GM12878 (cell line): ENCODE measurements at regions of chr22 and their contacts with region 1.

Region 1: DNA sequence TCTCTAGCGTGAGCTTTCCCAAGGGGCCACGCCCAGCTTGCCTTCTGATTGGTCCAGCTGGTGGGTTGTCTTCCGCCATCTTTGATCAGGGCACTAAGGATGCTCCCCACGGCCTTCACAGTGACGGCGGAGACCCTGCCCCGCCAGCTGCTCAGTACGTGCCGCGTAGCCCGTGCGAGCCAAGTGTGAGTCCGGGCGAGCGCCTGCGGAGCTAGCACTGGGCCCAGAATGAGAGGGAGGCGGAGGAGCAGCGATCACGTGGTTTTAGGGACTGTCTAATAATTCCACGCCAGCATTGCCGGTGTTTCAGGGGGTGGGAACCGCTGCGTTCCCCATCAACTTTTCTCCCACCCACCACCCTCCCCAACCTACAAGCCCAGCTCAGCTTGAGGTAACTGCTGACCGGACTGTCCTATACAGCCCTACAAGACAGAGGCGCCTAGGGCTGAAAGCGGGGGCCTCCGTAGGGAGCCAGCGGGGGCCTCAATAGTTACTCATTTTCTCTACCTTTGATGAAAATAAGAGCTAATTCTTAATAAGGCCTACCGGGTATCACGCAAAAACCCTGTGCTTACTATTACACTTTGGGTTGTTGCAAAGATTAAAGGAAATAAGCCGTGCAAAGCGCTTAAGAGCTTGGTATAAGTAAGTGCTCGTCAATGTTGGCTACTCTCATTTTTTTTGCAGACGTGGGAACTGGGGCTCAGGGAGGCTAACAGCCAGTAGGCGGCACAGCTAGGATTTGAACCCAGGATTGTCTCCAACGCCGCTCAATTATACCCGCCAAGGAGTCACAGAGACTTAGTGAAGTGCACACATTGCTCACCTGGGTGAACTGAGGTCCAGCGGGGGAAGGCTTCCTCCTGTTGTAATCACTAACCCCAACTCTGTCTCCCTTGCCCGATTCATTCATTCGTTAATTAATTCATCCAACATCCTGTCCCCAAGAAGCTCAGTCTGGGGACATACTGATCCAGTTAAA is 1.3 kb upstream of the MTFP1 start:
- DNase-seq: peak; percentile 99
- ATAC-seq: peak; percentile 88
- H3K4me3 ChIP-seq: peak overlapping the region; percentile 86
- H3K27ac ChIP-seq: peak overlapping the region; percentile 91
- H3K4me1 ChIP-seq: peaks cover 22% of the 10 kb centered on the region
- H3K27me3 ChIP-seq: no peaks in the 10 kb centered on the region
- CTCF ChIP-seq: peak in 1 of 3 experiments; percentile 15; a peak in 1 of 6 replicates
- EP300 ChIP-seq: no peak; a peak in 1 of 4 replicates
- POLR2A ChIP-seq: peak; percentile 85
- RAD21 ChIP-seq: no peak

Region 2: DNA sequence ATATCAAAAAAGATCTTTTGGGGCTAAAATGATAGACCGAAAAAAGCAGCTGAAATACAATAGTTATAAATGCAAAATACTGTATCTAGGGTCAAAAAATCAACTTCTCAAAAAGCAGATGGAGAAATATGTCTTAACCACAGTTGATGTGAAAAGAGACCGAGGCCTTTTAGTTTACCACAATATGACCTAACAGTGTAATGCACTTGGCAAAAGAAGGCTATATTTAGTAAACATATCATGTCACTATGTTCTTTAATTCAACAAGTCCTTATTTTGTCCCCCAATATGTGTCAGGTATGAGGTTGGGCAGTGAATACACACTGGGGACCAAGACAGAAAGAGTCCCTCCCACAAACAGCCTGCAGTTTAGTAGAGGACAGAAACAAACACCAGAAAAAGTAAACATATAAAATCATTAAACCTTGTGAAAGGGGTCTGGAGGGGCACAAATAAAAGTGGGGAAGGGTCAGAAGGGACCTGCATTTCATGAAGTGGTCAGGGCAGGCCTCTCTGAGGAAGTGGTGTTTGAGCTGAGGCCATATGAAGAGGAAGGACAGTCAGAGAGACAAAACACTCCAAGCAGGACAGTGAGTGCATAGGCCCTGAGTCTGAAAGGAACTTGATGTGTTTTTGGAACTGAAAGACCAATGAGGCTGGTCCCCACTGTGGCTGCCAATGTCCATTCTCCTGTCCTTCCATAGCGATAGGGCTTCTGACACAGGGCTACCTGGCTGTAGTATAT is 231.1 kb before region 1 on chr22:
- CTCF ChIA-PET with region 1: no interaction called
- POLR2A ChIA-PET with region 1: no interaction called
- RAD21 ChIA-PET with region 1: no interaction called
- SMC1A ChIA-PET with region 1: no interaction called
- in situ Hi-C with region 1: no loop called
- intact Hi-C with region 1: no loop called
- DNase-seq: no peak
- ATAC-seq: no peak
- H3K4me3 ChIP-seq: no peak overlapping the region
- H3K27ac ChIP-seq: no peak overlapping the region
- H3K4me1 ChIP-seq: peaks cover 14% of the 10 kb centered on the region
- H3K27me3 ChIP-seq: no peaks in the 10 kb centered on the region
- CTCF ChIP-seq: no peak
- EP300 ChIP-seq: no peak
- POLR2A ChIP-seq: no peak
- RAD21 ChIP-seq: no peak

Region 3: GRCh38 chr22:30305519-30305905 is 118.8 kb before region 1 on chr22:
- CTCF ChIA-PET with region 1: no interaction called
- POLR2A ChIA-PET with region 1: interaction called, 13 read pairs
- RAD21 ChIA-PET with region 1: interaction called, 4 read pairs
- SMC1A ChIA-PET with region 1: interaction called, 6 read pairs
- in situ Hi-C with region 1: no loop called
- intact Hi-C with region 1: no loop called
- DNase-seq: peak; percentile 59
- ATAC-seq: peak; percentile 63
- H3K4me3 ChIP-seq: peak overlapping the region; percentile 51
- H3K27ac ChIP-seq: peak overlapping the region; percentile 96
- H3K4me1 ChIP-seq: peaks cover 85% of the 10 kb centered on the region
- H3K27me3 ChIP-seq: no peaks in the 10 kb centered on the region
- CTCF ChIP-seq: no peak
- EP300 ChIP-seq: no peak
- POLR2A ChIP-seq: peak; percentile 74
- RAD21 ChIP-seq: no peak

Region 4: DNA sequence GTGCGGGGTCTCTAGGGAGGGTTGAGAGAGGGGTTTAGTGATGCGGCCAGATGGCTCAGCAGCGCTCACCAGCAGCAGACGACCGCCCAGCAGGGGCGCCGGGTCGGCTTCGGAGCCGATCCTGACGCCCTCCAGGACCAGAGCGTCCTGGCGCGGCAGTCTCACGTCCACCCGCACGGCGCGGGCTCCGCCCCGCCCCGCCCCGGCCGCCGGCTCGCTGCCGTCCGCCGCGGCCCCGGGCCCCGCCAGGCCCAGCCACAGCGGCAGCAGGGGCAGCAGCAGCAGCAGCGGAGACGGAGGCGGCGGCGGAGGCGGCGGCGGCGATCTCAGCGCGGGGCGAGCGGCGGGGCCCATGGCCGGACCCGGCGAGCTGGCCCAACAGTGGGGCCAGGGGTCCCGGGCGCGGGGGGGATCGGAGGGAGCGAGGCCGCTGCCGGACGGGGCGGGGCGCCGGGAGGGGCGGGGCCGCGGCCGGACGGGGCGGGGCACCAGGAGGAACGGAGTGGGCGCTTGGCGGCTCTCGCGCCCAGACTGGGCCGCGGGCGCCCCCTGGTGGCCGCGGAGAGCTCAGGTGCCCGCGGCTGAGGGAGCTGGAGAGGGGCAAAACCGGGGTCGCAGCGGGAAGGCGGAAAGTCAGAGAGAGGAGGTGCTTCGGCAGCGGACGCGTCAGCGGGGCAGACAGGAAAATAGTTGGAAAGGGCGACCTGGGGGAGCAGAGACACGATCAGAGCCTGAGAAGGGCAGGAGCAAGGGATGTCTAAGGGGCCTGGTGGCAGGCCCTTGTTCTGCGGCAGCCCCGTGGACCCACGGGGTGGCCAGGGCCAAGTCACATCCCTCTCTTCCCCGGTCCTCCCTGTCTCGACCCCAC is 37.1 kb before region 1 on chr22 and contains the start of gene RNF215:
- CTCF ChIA-PET with region 1: interaction called, 172 read pairs
- POLR2A ChIA-PET with region 1: interaction called, 60 read pairs
- RAD21 ChIA-PET with region 1: interaction called, 137 read pairs
- SMC1A ChIA-PET with region 1: interaction called, 69 read pairs
- in situ Hi-C with region 1: no loop called
- intact Hi-C with region 1: loop called (anchors 1 kb)
- DNase-seq: no peak
- ATAC-seq: peak; percentile 88
- H3K4me3 ChIP-seq: peak within 1 kb of the TSS; percentile 77; the same call in 1 of the 2 replicates
- H3K27ac ChIP-seq: no peak within 1 kb of the TSS; the same call in 1 of the 2 replicates
- H3K4me1 ChIP-seq: peaks cover 15% of the 10 kb centered on the region
- H3K27me3 ChIP-seq: no peaks in the 10 kb centered on the region
- CTCF ChIP-seq: peak; percentile 76 to 86 (median 83)
- EP300 ChIP-seq: no peak
- POLR2A ChIP-seq: no peak; the same call in 1 of the 2 replicates
- RAD21 ChIP-seq: peak; percentile 85
- polyA plus RNA-seq, gene RNF215: 0.31 TPM in 1 of 2 experiments, not detected in the other

Region 5: GRCh38 chr22:30402028-30402765 is 22.1 kb before region 1 on chr22:
- CTCF ChIA-PET with region 1: interaction called, 172 read pairs
- POLR2A ChIA-PET with region 1: interaction called, 24 read pairs
- RAD21 ChIA-PET with region 1: interaction called, 137 read pairs
- SMC1A ChIA-PET with region 1: interaction called, 5 read pairs
- in situ Hi-C with region 1: no loop called
- intact Hi-C with region 1: no loop called
- DNase-seq: no peak
- ATAC-seq: no peak
- H3K4me3 ChIP-seq: no peak overlapping the region
- H3K27ac ChIP-seq: no peak overlapping the region
- H3K4me1 ChIP-seq: 0 out of 2 replicates have a peak, but pooled peaks cover 5% of the 10 kb centered on the region
- H3K27me3 ChIP-seq: peaks cover 4 to 7% of the 10 kb centered on the region in 2 experiments
- CTCF ChIP-seq: no peak
- EP300 ChIP-seq: no peak
- POLR2A ChIP-seq: no peak
- RAD21 ChIP-seq: no peak

Region 6: DNA sequence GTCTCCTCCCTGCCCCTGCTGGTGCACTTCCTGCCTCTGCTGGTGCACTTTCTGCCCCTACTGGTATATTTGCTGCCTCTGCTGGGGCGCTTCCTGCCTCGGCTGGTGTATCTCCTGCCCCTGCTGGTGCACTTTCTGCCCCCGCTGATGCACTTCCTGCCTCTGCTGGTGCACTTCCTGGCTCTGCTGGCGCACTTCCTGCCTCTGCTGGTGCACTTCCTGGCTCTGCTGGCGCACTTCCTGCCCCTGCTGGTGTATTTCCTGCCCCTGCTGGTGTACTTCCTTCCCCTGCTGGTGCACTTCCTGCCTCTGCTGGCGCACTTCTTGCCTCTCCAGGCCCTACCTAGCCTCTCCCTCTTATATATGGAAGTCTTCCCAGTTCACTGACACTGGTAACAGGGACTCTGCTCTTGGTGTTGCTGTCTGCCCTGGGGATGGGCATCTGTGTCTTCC is 11.4 kb after region 1 on chr22:
- CTCF ChIA-PET with region 1: interaction called, 21 read pairs
- POLR2A ChIA-PET with region 1: interaction called, 12 read pairs
- RAD21 ChIA-PET with region 1: no interaction called
- SMC1A ChIA-PET with region 1: interaction called, 11 read pairs
- in situ Hi-C with region 1: no loop called
- intact Hi-C with region 1: no loop called
- DNase-seq: no peak
- ATAC-seq: peak; percentile 52
- H3K4me3 ChIP-seq: 0 out of 2 replicates have a peak overlapping the region, but pooled peaks have one; percentile 7
- H3K27ac ChIP-seq: 0 out of 2 replicates have a peak overlapping the region, but pooled peaks have one; percentile 37
- H3K4me1 ChIP-seq: peaks cover 8% of the 10 kb centered on the region
- H3K27me3 ChIP-seq: no peaks in the 10 kb centered on the region
- CTCF ChIP-seq: peak in 2 of 3 experiments; percentile 17 to 32; a peak in 3 of 6 replicates
- EP300 ChIP-seq: no peak
- POLR2A ChIP-seq: peak; percentile 30
- RAD21 ChIP-seq: no peak

Region 7: GRCh38 chr22:30523776-30524489 is 99.7 kb after region 1 on chr22:
- CTCF ChIA-PET with region 1: no interaction called
- POLR2A ChIA-PET with region 1: no interaction called
- RAD21 ChIA-PET with region 1: no interaction called
- SMC1A ChIA-PET with region 1: no interaction called
- in situ Hi-C with region 1: no loop called
- intact Hi-C with region 1: no loop called
- DNase-seq: no peak
- ATAC-seq: no peak
- H3K4me3 ChIP-seq: no peak overlapping the region
- H3K27ac ChIP-seq: no peak overlapping the region
- H3K4me1 ChIP-seq: no peaks in the 10 kb centered on the region
- H3K27me3 ChIP-seq: peaks cover 0 to 4% of the 10 kb centered on the region in 2 experiments; a peak in 2 of 4 replicates
- CTCF ChIP-seq: no peak
- EP300 ChIP-seq: no peak
- POLR2A ChIP-seq: no peak
- RAD21 ChIP-seq: no peak